Activated T-helper 2 cell treated with anti-CD3 and anti-CD28 coated beads, Interferon-gamma antibody, Interleukin-2, Interleukin-4, amounts not matched to agents 10 μg/mL and 5 μg/mL and 100 μg/mL, durations not matched to agents 14 hours and 24 hours and 36 hours (primary cell): ENCODE measurements at regions of chr7 and their contacts with region 1.

Region 1: GRCh38 chr7:35374538-35375257 is 120.8 kb upstream of the TBX20 start:
- DNase-seq: no peak
- H3K4me3 Mint-ChIP-seq: no peak overlapping the region
- H3K27ac Mint-ChIP-seq: no peak overlapping the region
- H3K4me1 Mint-ChIP-seq: no peaks in the 10 kb centered on the region
- H3K27me3 Mint-ChIP-seq: no peaks in the 10 kb centered on the region

Region 2: GRCh38 chr7:34772296-34772938 is 602.3 kb before region 1 on chr7:
- intact Hi-C with region 1: loop called (anchors 5 kb)
- DNase-seq: no peak
- H3K4me3 Mint-ChIP-seq: no peak overlapping the region
- H3K27ac Mint-ChIP-seq: no peak overlapping the region
- H3K4me1 Mint-ChIP-seq: no peaks in the 10 kb centered on the region
- H3K27me3 Mint-ChIP-seq: no peaks in the 10 kb centered on the region